Gastrocnemius medialis (tissue), 4 donors: ENCODE measurements at regions of chr17 and their contacts with region 1.

Region 1: GRCh38 chr17:35088881-35089585 is 25.5 kb upstream of the RFFL start:
- DNase-seq: peak; percentile 60 to 79
- ATAC-seq: peak; percentile 88 to 93
- H3K4me3 ChIP-seq: peak overlapping the region; percentile 66 to 100 (median 82)
- H3K27ac ChIP-seq: peak overlapping the region; percentile 56 to 77 (median 74)
- H3K4me1 ChIP-seq: peaks cover 6 to 14% of the 10 kb centered on the region in 2 donors
- H3K27me3 ChIP-seq: no peaks in the 10 kb centered on the region
- CTCF ChIP-seq: peak; percentile 70 to 93 (median 86)
- POLR2A ChIP-seq: peak; percentile 33 to 36

Region 2: GRCh38 chr17:34961093-34961911 is 127.7 kb before region 1 on chr17 and contains the starts of genes CCT6B and ZNF830:
- in situ Hi-C with region 1: loop called in 1 of 4 experiments (anchors 10 kb)
- intact Hi-C with region 1: loop called (anchors 1 kb)
- DNase-seq: peak; percentile 86 to 89
- ATAC-seq: peak; percentile 99 to 100
- H3K4me3 ChIP-seq: peak within 1 kb of the TSS; percentile 77 to 97 (median 92)
- H3K27ac ChIP-seq: peak within 1 kb of the TSS; percentile 90 to 98 (median 93)
- H3K4me1 ChIP-seq: peaks cover 23 to 26% of the 10 kb centered on the region in 2 donors
- H3K27me3 ChIP-seq: no peaks in the 10 kb centered on the region
- CTCF ChIP-seq: no peak
- POLR2A ChIP-seq: peak; percentile 51 to 60
- total RNA-seq, gene CCT6B: 1.4 to 5.4 (median 2.8) TPM
- total RNA-seq, gene ZNF830: 6.0 to 11.0 (median 7.2) TPM

Region 3: GRCh38 chr17:34998205-34998604 is 90.8 kb before region 1 on chr17:
- in situ Hi-C with region 1: loop called in 3 of 4 experiments (anchors 10 to 25 kb)
- intact Hi-C with region 1: loop called (anchors 1 kb)
- DNase-seq: peak; percentile 38 to 64
- ATAC-seq: peak; percentile 65 to 89
- H3K4me3 ChIP-seq: no peak overlapping the region
- H3K27ac ChIP-seq: peak overlapping the region in 1 of 4 donors; percentile 34
- H3K4me1 ChIP-seq: peaks cover 6 to 9% of the 10 kb centered on the region in 2 donors
- H3K27me3 ChIP-seq: no peaks in the 10 kb centered on the region
- CTCF ChIP-seq: peak; percentile 59 to 83 (median 72)
- POLR2A ChIP-seq: no peak

Region 4: DNA sequence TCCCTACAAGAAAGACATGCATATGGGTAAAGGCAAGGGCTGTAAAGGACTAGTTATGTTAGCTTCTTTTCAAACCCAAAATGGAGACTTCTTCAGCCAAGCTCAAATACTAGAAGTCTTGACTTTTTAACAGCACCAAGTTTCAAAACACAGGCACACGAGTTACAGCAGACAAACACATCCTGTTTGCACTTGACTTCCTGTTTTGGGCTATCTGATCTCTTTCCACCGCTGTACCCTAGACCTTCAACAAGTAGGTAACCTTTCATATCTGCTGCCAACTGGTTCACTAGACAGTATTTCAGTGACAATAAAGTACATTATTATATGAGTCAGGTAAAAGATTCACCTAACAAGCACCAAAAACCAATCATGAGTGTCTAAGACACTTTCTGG is 37.9 kb before region 1 on chr17:
- in situ Hi-C with region 1: no loop called
- intact Hi-C with region 1: no loop called
- DNase-seq: no peak
- ATAC-seq: peak in 1 of 2 donors; percentile 52
- H3K4me3 ChIP-seq: no peak overlapping the region
- H3K27ac ChIP-seq: peak overlapping the region; percentile 27 to 46 (median 33)
- H3K4me1 ChIP-seq: peaks cover 15 to 24% of the 10 kb centered on the region in 2 donors
- H3K27me3 ChIP-seq: no peaks in the 10 kb centered on the region
- CTCF ChIP-seq: no peak
- POLR2A ChIP-seq: no peak

Region 5: DNA sequence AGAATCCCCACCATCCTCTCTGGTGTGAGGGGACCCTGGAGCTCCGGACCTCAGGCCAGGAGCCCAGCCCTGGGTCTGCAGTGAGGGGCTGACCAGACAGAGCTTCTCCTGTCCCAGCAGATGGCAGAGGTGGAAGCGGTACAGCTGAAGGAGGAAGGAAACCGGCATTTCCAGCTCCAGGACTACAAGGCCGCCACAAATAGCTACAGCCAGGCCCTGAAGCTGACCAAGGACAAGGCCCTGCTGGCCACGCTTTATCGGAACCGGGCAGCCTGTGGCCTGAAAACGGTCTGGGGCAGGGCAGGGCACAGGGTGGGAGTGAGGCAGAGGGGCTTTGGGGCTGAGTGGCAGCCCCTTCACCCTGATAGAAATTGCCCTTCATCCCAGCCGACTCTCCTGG is 59.1 kb after region 1 on chr17:
- in situ Hi-C with region 1: no loop called
- intact Hi-C with region 1: loop called (anchors 2 kb)
- DNase-seq: peak in 1 of 2 donors; percentile 41
- ATAC-seq: peak; percentile 29 to 35
- H3K4me3 ChIP-seq: peak overlapping the region; percentile 53 to 64 (median 60)
- H3K27ac ChIP-seq: peak overlapping the region; percentile 94 to 98 (median 97)
- H3K4me1 ChIP-seq: peaks cover 23 to 39% of the 10 kb centered on the region in 2 donors
- H3K27me3 ChIP-seq: no peaks in the 10 kb centered on the region
- CTCF ChIP-seq: peak in 1 of 5 experiments; percentile 5
- POLR2A ChIP-seq: no peak